ENCODE measurements at regions of chr2 and their contacts with region 1.

Region 1: DNA sequence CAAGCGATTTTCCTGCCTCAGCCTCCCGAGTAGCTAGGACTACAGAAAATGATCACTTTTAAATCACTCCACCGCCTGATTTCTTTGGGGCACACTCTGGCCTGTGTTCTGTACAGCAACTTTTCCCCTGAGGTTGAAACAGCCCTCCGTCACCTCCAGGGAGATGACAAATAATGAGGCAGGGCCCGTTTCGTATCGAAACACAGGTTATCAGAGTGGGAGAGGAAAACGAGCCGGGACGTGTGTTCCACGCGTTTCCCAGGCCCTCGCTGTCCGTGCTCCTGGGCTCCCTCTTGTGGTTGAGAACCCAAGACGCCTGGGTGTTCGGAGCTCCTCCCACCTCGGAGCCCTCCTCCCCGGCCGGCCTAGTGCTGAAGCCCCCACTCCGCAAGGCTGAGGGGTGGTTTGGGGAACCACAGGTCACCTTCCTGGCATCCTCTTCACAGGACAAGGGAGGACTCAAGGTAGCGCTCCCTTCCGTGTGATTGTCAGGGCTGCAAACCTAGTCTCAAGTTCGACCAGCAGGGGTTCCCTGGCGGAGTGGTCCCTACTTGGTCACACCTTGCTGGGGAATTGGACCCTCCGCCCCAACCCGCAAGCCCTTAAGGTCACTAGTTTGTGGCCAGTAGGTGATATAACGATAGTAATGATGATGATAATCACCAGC is 12.8 kb downstream of the ATP6V1B1 start:
- DNase-seq: peak; percentile 61 to 81 (median 72)
- H3K4me3 ChIP-seq: peak overlapping the region; percentile 7 to 62 (median 40)
- H3K27ac ChIP-seq: no peak overlapping the region
- H3K27me3 ChIP-seq: no peaks in the 10 kb centered on the region
- CTCF ChIP-seq: peak; percentile 30 to 93 (median 84)

Region 2: DNA sequence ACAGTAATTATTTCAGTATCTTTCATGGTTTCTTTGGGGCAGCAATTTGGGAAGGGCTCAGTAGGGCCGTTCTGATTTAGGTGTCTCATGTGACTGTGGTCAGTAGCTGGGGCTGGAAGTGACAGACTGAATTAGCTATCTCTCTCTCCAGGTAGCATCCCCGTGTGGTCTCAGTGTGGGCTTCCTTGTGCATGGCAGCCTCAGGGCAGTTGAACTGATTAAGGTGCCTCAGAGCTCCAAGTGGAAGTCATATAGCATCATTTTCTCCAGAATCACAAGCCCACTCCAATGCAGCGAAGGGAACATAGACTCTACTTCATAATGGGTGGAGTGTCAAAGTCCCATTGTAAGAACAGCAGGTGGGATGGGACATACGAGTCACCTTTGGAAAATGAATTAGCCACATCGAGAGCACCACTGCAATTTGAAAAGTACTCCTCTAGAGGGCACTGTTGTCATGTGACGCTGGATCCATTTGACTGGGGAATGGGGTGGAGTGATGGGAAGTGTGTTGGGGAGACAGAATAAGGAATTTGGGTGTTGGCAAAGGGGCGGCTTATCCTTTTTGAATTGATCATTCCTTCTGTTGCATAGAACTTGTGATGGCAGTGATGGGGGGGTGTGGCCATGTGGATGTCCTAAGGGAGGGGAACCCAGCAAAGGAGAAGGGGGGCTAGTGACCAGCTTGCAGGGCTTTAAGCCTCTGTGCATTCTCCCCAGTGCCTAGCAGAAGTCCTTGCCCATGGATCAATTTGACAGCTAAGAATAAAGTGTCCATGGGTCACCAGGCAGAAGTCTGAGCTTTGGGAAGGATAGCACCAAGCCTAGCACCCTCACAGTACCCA is 607.3 kb before region 1 on chr2:
- intact Hi-C with region 1: no loop called
- DNase-seq: peak in 2 of 10 donors; percentile 16 to 36
- H3K4me3 ChIP-seq: no peak overlapping the region
- H3K27ac ChIP-seq: no peak overlapping the region
- H3K27me3 ChIP-seq: peaks cover 0 to 12% (median 0%) of the 10 kb centered on the region in 45 donors
- CTCF ChIP-seq: peak; percentile 38 to 89 (median 80)

Region 3: GRCh38 chr2:70656421-70657010 is 292.0 kb before region 1 on chr2:
- intact Hi-C with region 1: loop called (anchors 10 kb)
- DNase-seq: no peak
- H3K4me3 ChIP-seq: no peak overlapping the region
- H3K27ac ChIP-seq: no peak overlapping the region
- H3K27me3 ChIP-seq: peaks cover 0 to 15% (median 0%) of the 10 kb centered on the region in 45 donors
- CTCF ChIP-seq: no peak

Region 4: GRCh38 chr2:70789304-70790135 is 158.9 kb before region 1 on chr2:
- intact Hi-C with region 1: loop called (anchors 5 to 10 kb)
- DNase-seq: peak; percentile 57 to 82 (median 72)
- H3K4me3 ChIP-seq: peak overlapping the region in 55 of 59 donors; percentile 3 to 62 (median 43)
- H3K27ac ChIP-seq: no peak overlapping the region
- H3K27me3 ChIP-seq: peaks cover 0 to 80% (median 40%) of the 10 kb centered on the region in 45 donors
- CTCF ChIP-seq: peak in 55 of 56 donors; percentile 44 to 85 (median 71)

Region 5: DNA sequence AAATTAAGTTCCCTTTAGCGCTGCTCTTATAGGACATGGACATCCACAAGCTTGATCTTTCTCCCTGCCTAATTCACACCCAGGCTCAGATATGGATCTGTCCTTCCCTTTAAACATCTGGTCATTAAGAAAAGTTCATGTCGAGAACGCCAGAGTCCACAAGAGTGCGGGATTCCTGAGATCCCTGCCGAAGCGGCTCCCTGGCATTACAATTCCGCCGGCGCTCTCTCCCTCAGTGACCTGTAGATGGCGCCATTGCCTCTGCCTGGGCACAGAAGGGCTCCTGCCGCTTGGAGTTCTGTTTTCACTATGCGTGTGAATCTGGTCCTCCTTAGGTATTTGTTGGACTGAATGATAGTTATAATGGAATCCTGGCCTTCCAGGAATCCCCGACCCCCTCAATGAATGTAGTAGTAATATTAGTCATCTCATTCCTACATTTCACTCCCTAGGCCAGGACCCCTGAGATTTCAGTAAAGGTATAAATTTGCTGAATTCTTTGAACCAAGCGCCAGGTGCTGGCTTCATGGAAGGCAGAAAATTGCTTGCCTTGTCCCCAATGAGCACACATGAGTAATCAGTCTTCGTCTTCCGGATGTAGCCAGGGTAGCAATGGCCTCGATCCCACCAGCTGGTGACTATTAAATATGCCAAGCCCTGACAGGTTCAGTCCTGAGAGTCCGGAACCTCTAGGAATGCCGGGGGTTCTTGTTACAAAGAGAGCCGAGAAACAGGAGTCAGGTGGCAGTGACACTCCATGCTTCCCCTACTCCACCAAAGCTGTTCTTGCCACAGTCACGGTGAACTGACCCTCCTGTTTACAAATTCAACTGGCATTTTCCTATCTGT is 86.5 kb before region 1 on chr2:
- intact Hi-C with region 1: loop called in 1 of 2 experiments (anchors 2 kb)
- DNase-seq: peak; percentile 60 to 87 (median 78)
- H3K4me3 ChIP-seq: peak overlapping the region in 1 of 59 donors; percentile 31
- H3K27ac ChIP-seq: no peak overlapping the region
- H3K27me3 ChIP-seq: peaks cover 0 to 51% (median 27%) of the 10 kb centered on the region in 45 donors
- CTCF ChIP-seq: peak; percentile 55 to 98 (median 91)

Region 6: DNA sequence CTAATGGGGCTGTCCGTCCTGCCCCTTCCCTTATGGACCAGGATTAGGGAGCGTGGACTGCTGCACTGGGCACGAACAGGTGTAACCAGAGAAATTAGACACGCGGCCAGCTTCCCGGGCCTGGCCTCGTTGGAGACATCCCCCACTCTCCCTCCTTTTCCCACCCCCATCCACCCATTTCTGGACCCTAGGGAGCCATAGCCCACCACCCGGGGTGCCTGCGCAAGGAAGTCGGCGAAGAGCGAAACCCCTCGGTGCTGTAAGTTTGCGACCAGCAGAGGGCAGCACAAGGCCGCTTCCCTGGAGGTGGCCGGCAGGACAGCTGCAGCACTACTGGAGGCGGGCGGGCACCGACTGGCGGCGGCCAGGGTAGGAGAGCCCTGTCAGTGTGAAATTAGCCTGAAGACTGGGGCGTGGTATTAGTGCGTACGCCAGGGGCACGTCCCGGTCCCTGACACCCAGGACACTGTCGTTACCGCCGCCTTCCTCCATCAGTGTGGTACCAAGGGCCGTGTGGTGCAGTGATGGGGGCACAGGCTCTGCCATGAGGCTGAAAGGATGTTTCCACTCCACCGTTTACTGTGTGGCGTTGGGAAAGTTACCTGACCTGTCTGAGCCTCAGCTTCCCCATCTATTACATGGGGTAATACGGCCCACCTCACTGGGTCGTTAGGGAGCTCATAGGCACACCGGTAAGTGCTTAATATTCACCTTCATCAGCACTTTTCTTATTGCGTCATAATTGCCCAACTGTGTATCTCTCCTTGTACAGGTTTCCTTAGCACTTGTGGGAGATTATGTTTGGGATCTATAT is 76.9 kb before region 1 on chr2:
- intact Hi-C with region 1: loop called (anchors 2 to 5 kb)
- DNase-seq: peak; percentile 65 to 83 (median 72)
- H3K4me3 ChIP-seq: peak overlapping the region in 32 of 59 donors; percentile 9 to 57 (median 31)
- H3K27ac ChIP-seq: no peak overlapping the region
- H3K27me3 ChIP-seq: peaks cover 0 to 63% (median 44%) of the 10 kb centered on the region in 45 donors
- CTCF ChIP-seq: peak; percentile 58 to 98 (median 90)

Region 7: GRCh38 chr2:71043531-71044407 is 95.3 kb after region 1 on chr2:
- intact Hi-C with region 1: no loop called
- DNase-seq: no peak
- H3K4me3 ChIP-seq: no peak overlapping the region
- H3K27ac ChIP-seq: no peak overlapping the region
- H3K27me3 ChIP-seq: peaks cover 0 to 7% (median 0%) of the 10 kb centered on the region in 45 donors
- CTCF ChIP-seq: no peak

Measured in dorsolateral prefrontal cortex (tissue), 120 donors.